A549 (cell line): ENCODE measurements at regions of chr6 and their contacts with region 1.

Region 1: GRCh38 chr6:32825966-32826365 is 9.2 kb upstream of the HLA-DOB start:
- DNase-seq: peak in 1 of 2 experiments; percentile 24
- ATAC-seq: peak; percentile 68 to 71; a peak in 5 of 6 replicates
- H3K4me3 ChIP-seq: no peak overlapping the region
- H3K27ac ChIP-seq: no peak overlapping the region
- H3K4me1 ChIP-seq: no peaks in the 10 kb centered on the region
- CTCF ChIP-seq: peak; percentile 40
- EP300 ChIP-seq: no peak
- POLR2A ChIP-seq: no peak
- RAD21 ChIP-seq: peak; percentile 47 to 49

Region 2: GRCh38 chr6:32742374-32742773 is 83.6 kb before region 1 on chr6:
- CTCF ChIA-PET with region 1: no interaction called
- POLR2A ChIA-PET with region 1: no interaction called
- DNase-seq: no peak
- ATAC-seq: no peak
- H3K4me3 ChIP-seq: no peak overlapping the region
- H3K27ac ChIP-seq: no peak overlapping the region
- H3K4me1 ChIP-seq: no peaks in the 10 kb centered on the region
- CTCF ChIP-seq: no peak
- EP300 ChIP-seq: no peak
- POLR2A ChIP-seq: no peak
- RAD21 ChIP-seq: no peak

Region 3: DNA sequence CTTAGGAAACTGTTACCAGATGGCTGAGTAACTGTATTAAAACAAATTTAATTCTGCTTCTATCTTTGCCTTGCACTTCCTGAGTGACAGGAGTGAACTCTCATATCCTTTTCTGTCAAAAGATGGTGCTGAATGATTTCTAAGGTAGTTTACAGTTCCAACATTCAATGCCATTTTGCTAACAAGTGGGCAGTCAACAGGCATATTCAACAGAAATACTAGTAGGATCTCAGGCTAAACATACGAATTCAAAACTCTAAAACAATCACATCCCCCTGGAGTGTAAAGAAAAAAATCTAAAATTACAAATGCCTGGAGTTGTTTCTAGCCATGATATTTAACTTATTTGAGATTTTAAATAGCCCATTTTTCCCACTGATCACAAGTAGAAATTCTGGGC is 34.7 kb after region 1 on chr6:
- CTCF ChIA-PET with region 1: interaction called, 13 read pairs
- POLR2A ChIA-PET with region 1: no interaction called
- DNase-seq: no peak
- ATAC-seq: no peak
- H3K4me3 ChIP-seq: no peak overlapping the region
- H3K27ac ChIP-seq: peak overlapping the region in 1 of 2 experiments; percentile 69; a peak in 2 of 6 replicates
- H3K4me1 ChIP-seq: peaks cover 9% of the 10 kb centered on the region; the same call in 2 of the 3 replicates
- CTCF ChIP-seq: no peak
- EP300 ChIP-seq: no peak
- POLR2A ChIP-seq: no peak
- RAD21 ChIP-seq: no peak